T-cell (primary cell): ENCODE measurements at regions of chr6 and their contacts with region 1.

Region 1: DNA sequence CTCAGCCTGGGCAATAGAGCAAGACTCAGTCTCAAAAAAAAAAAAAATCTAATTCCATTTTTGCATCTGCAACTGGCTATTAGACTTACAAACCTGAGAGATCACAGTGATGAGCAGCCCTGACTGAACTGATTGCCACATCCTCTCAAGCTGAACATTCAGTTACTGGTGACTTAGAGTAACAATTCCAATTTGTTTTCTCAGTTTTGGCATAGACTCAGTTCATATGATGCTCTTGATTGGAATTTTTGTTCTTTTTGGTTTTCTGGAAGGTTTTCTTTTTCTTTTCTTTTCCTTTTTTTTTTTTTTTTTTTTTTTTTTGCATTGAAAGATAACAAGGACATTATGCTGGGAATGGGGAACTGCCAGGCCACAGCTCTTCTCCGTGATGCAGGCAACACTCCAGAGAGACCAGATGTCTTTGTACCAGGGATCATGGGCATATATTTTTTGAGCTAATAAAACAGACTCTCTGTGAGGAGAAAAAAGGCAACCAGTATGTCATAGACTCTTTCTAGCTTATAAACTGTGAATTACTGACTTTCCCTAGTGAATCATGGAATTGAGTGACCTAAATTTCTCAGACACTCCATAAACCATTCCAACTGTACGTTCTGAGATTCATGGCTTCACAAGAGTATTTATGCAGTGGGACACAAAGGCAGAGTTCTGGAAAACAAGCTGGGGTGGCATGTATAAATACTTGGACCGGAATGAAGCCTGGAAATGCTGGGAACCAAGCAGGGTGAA is 86.0 kb upstream of the SLC2A12 start:
- DNase-seq: no peak
- ATAC-seq: no peak
- H3K4me3 ChIP-seq: no peak overlapping the region
- H3K4me3 Mint-ChIP-seq: no peak overlapping the region
- H3K27ac ChIP-seq: no peak overlapping the region
- H3K27ac Mint-ChIP-seq: no peak overlapping the region
- H3K4me1 ChIP-seq: no peaks in the 10 kb centered on the region
- H3K4me1 Mint-ChIP-seq: no peaks in the 10 kb centered on the region
- H3K27me3 ChIP-seq: no peaks in the 10 kb centered on the region
- H3K27me3 Mint-ChIP-seq: peaks cover 3 to 10% of the 10 kb centered on the region in 2 donors

Region 2: GRCh38 chr6:134161036-134161435 is 22.6 kb after region 1 on chr6:
- CTCF ChIA-PET with region 1: interaction called, 6 to 10 read pairs
- POLR2A ChIA-PET with region 1: no interaction called
- DNase-seq: no peak
- ATAC-seq: no peak
- H3K4me3 ChIP-seq: no peak overlapping the region
- H3K4me3 Mint-ChIP-seq: no peak overlapping the region
- H3K27ac ChIP-seq: no peak overlapping the region
- H3K27ac Mint-ChIP-seq: no peak overlapping the region
- H3K4me1 ChIP-seq: no peaks in the 10 kb centered on the region
- H3K4me1 Mint-ChIP-seq: no peaks in the 10 kb centered on the region
- H3K27me3 ChIP-seq: no peaks in the 10 kb centered on the region
- H3K27me3 Mint-ChIP-seq: no peaks in the 10 kb centered on the region

Region 3: GRCh38 chr6:134230087-134230700 is 91.8 kb after region 1 on chr6:
- CTCF ChIA-PET with region 1: no interaction called
- POLR2A ChIA-PET with region 1: no interaction called
- DNase-seq: peak in 3 of 35 experiments; percentile 2 to 24 (median 6)
- ATAC-seq: no peak
- H3K4me3 ChIP-seq: no peak overlapping the region
- H3K4me3 Mint-ChIP-seq: peak overlapping the region in 1 of 3 donors; percentile 16
- H3K27ac ChIP-seq: no peak overlapping the region
- H3K27ac Mint-ChIP-seq: no peak overlapping the region
- H3K4me1 ChIP-seq: peaks cover 0 to 3% of the 10 kb centered on the region in 2 experiments
- H3K4me1 Mint-ChIP-seq: peaks cover 8 to 21% (median 10%) of the 10 kb centered on the region in 3 donors
- H3K27me3 ChIP-seq: no peaks in the 10 kb centered on the region
- H3K27me3 Mint-ChIP-seq: no peaks in the 10 kb centered on the region